Heart left ventricle (tissue), 16 donors: ENCODE measurements at regions of chr9 and their contacts with region 1.

Region 1: DNA sequence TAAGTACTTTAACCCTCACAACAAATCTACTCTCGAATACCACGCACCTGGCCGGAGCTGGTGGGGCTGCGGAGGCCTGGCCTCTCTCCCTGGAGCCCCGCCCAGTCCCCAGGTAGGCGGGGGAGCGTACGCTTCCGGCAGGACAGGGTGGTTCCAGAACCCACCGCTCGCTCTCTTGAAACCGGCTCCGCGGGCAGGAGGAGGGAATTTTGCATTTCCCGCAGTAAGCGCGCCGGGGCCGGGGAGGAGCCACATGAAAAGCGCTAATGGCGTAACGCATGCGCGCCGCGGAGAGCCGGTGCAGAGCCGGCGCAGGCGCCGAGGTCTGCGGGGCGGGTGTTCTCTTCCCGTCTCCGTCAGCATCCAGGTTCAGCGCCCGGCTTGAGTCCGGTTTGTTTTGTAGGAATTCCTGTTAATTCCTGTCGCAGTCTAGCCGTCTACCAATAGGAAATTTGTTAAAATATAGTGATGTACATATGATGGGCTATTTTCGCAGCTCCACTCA is 20.8 kb downstream of the CAVIN4 start:
- DNase-seq: peak; percentile 79 to 91 (median 82)
- ATAC-seq: peak; percentile 66 to 86 (median 84)
- H3K4me3 ChIP-seq: peak overlapping the region; percentile 13 to 66 (median 54)
- H3K27ac ChIP-seq: no peak overlapping the region
- H3K4me1 ChIP-seq: peaks cover 0 to 17% (median 7%) of the 10 kb centered on the region in 12 donors
- H3K27me3 ChIP-seq: no peaks in the 10 kb centered on the region
- CTCF ChIP-seq: peak in 1 of 12 donors; percentile 6
- POLR2A ChIP-seq: no peak

Region 2: GRCh38 chr9:99807276-99807852 is 791.3 kb before region 1 on chr9:
- intact Hi-C with region 1: loop called in 1 of 10 experiments (anchors 10 kb)
- DNase-seq: peak; percentile 56 to 70 (median 61)
- ATAC-seq: peak in 2 of 4 donors; percentile 59 to 65
- H3K4me3 ChIP-seq: no peak overlapping the region
- H3K27ac ChIP-seq: no peak overlapping the region
- H3K4me1 ChIP-seq: peaks cover 0 to 11% (median 1%) of the 10 kb centered on the region in 12 donors
- H3K27me3 ChIP-seq: no peaks in the 10 kb centered on the region
- CTCF ChIP-seq: peak; percentile 70 to 91 (median 80)
- POLR2A ChIP-seq: no peak

Region 3: DNA sequence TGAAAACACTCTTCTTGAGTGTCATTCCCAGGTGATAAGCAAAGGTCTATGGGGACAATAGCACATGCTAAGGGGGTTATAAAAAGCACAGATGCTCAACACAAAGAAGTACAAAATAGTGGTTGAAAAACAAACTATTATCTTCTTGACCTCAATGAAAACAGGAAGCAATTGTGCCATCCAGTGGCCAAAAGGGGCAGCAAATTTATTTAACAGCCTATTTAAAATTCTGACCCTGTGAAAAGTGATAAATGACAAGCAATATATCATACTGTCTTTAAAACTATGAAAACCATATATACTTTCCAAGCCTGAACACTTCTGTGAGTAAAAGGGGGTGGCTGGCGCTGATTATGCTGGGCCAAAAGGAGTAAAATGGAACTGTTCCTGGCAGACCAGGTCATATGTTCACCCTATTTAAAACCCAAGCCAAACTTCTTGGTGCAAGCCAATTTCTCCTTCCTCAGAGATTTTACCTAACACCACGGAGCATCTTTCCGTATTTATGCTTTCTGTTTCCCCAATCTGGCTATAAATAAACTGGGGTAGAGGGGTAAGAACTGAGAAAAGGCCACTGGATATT is 275.6 kb before region 1 on chr9:
- intact Hi-C with region 1: loop called in 3 of 10 experiments (anchors 10 kb)
- DNase-seq: no peak
- ATAC-seq: no peak
- H3K4me3 ChIP-seq: no peak overlapping the region
- H3K27ac ChIP-seq: no peak overlapping the region
- H3K4me1 ChIP-seq: peaks cover 0 to 6% (median 0%) of the 10 kb centered on the region in 12 donors
- H3K27me3 ChIP-seq: no peaks in the 10 kb centered on the region
- CTCF ChIP-seq: peak; percentile 46 to 75 (median 62)
- POLR2A ChIP-seq: no peak

Region 4: GRCh38 chr9:100377015-100377414 is 221.7 kb before region 1 on chr9:
- intact Hi-C with region 1: no loop called
- DNase-seq: no peak
- ATAC-seq: no peak
- H3K4me3 ChIP-seq: no peak overlapping the region
- H3K27ac ChIP-seq: no peak overlapping the region
- H3K4me1 ChIP-seq: no peaks in the 10 kb centered on the region
- H3K27me3 ChIP-seq: no peaks in the 10 kb centered on the region
- CTCF ChIP-seq: no peak
- POLR2A ChIP-seq: no peak

Region 5: GRCh38 chr9:100426530-100427428 is 171.9 kb before region 1 on chr9 and contains the start of gene MSANTD3:
- intact Hi-C with region 1: loop called in 2 of 10 experiments (anchors 5 to 10 kb)
- DNase-seq: peak; percentile 67 to 85 (median 71)
- ATAC-seq: peak; percentile 65 to 83 (median 81)
- H3K4me3 ChIP-seq: peak within 1 kb of the TSS; percentile 64 to 98 (median 88)
- H3K27ac ChIP-seq: peak within 1 kb of the TSS; percentile 78 to 95 (median 86)
- H3K4me1 ChIP-seq: peaks cover 0 to 33% (median 20%) of the 10 kb centered on the region in 12 donors
- H3K27me3 ChIP-seq: no peaks in the 10 kb centered on the region
- CTCF ChIP-seq: peak in 2 of 12 donors; percentile 29 to 32
- POLR2A ChIP-seq: peak in 1 of 2 donors; percentile 53
- total RNA-seq, gene MSANTD3: 17.8 to 60.5 (median 24.1) TPM

Region 6: GRCh38 chr9:100449420-100449819 is 149.3 kb before region 1 on chr9:
- intact Hi-C with region 1: loop called in 4 of 10 experiments (anchors 5 to 10 kb)
- DNase-seq: no peak
- ATAC-seq: no peak
- H3K4me3 ChIP-seq: no peak overlapping the region
- H3K27ac ChIP-seq: no peak overlapping the region
- H3K4me1 ChIP-seq: peaks cover 0 to 15% (median 0%) of the 10 kb centered on the region in 12 donors
- H3K27me3 ChIP-seq: no peaks in the 10 kb centered on the region
- CTCF ChIP-seq: no peak
- POLR2A ChIP-seq: no peak

Region 7: DNA sequence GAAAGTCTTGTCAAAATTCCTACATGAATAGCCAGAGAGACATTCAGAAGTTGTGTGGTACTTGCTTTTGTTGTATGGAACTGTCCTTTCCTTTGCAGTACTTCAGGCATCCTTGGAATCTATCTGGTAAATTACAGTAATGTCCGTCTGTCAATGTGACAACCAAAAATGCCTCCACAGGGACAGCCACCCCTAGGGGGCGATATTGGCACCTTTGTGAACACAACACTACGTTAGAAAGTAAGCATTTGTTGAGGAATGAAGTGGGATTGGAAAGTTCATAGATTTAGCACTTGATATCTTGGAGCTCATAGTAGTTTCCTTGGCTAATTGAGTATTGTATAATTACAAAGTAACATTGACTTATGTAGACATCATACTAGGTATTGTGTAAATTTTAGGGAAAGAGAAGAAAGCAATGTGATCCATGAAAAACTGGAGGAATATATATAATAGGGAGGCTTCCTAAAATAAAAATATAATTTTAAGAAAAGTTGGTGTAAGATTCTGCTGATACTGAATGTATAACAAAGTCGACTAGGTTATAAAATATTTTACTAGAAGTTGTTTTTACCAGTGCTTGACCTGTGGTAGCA is 93.0 kb before region 1 on chr9:
- intact Hi-C with region 1: loop called in 7 of 10 experiments (anchors 1 to 5 kb)
- DNase-seq: peak; percentile 36 to 75 (median 58)
- ATAC-seq: no peak
- H3K4me3 ChIP-seq: no peak overlapping the region
- H3K27ac ChIP-seq: no peak overlapping the region
- H3K4me1 ChIP-seq: peaks cover 0 to 4% (median 0%) of the 10 kb centered on the region in 12 donors
- H3K27me3 ChIP-seq: no peaks in the 10 kb centered on the region
- CTCF ChIP-seq: peak; percentile 61 to 77 (median 68)
- POLR2A ChIP-seq: no peak

Region 8: GRCh38 chr9:100549048-100549447 is 49.6 kb before region 1 on chr9:
- intact Hi-C with region 1: no loop called
- DNase-seq: no peak
- ATAC-seq: no peak
- H3K4me3 ChIP-seq: no peak overlapping the region
- H3K27ac ChIP-seq: no peak overlapping the region
- H3K4me1 ChIP-seq: no peaks in the 10 kb centered on the region
- H3K27me3 ChIP-seq: no peaks in the 10 kb centered on the region
- CTCF ChIP-seq: no peak
- POLR2A ChIP-seq: no peak

Region 9: GRCh38 chr9:100652850-100653249 is 54.2 kb after region 1 on chr9:
- intact Hi-C with region 1: no loop called
- DNase-seq: no peak
- ATAC-seq: no peak
- H3K4me3 ChIP-seq: no peak overlapping the region
- H3K27ac ChIP-seq: no peak overlapping the region
- H3K4me1 ChIP-seq: no peaks in the 10 kb centered on the region
- H3K27me3 ChIP-seq: no peaks in the 10 kb centered on the region
- CTCF ChIP-seq: no peak
- POLR2A ChIP-seq: no peak

Region 10: GRCh38 chr9:101311758-101312420 is 713.2 kb after region 1 on chr9:
- intact Hi-C with region 1: loop called (anchors 1 to 5 kb)
- DNase-seq: no peak
- ATAC-seq: peak in 1 of 4 donors; percentile 45
- H3K4me3 ChIP-seq: no peak overlapping the region
- H3K27ac ChIP-seq: no peak overlapping the region
- H3K4me1 ChIP-seq: no peaks in the 10 kb centered on the region
- H3K27me3 ChIP-seq: peaks cover 0 to 17% (median 0%) of the 10 kb centered on the region in 9 donors
- CTCF ChIP-seq: peak; percentile 59 to 83 (median 72)
- POLR2A ChIP-seq: no peak